Body of pancreas (tissue), 4 donors: ENCODE measurements at regions of chr17 and their contacts with region 1.

Region 1: DNA sequence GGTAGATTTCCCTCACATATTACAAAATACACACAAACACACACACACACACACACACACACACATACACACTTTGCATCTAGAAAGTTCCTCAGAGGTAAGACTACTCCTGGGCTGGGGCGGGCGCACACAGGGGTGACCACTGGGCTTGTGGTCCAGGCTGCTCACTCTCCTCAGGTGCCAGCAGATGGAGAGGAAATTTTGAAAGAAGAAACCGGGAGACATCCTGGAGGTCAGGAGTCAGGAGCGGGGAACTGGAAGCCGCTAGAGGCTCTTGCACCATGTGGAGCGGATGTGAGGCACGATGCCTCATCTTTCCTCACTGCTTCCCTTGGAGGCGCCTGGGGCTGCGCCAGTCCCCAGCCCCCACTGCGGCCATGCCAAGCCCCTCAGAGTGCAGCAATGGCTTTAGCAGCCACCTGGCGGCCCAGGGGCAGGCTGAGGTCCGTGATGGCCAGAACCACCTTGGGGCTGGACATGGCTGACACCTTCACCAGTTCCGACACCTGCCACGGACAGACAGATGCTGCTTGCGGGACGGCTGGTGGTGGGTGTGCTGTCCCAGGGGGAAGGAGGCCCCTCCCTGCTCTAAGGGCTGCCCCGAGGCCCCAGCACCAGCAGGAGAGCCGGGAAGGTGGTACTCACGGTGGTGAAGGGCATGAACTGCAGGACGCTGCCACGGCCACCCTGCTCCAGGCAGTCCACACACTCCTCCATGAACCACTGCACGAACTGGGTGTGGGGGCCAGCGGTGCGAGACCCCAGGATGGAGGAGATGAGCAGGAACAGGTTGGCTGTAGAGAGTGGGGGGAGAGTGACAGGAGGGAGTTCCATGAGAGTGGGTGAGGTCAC is 4.1 kb downstream of the CSF3 start:
- DNase-seq: peak in 1 of 4 donors; percentile 31
- ATAC-seq: no peak
- H3K4me3 ChIP-seq: no peak overlapping the region
- H3K27ac ChIP-seq: no peak overlapping the region
- H3K4me1 ChIP-seq: peaks cover 25% of the 10 kb centered on the region
- H3K27me3 ChIP-seq: no peaks in the 10 kb centered on the region
- CTCF ChIP-seq: no peak
- POLR2A ChIP-seq: no peak

Region 2: GRCh38 chr17:40168262-40168832 is 149.0 kb after region 1 on chr17:
- intact Hi-C with region 1: loop called (anchors 10 kb)
- DNase-seq: peak; percentile 35 to 72 (median 66)
- ATAC-seq: peak; percentile 88
- H3K4me3 ChIP-seq: no peak overlapping the region
- H3K27ac ChIP-seq: peak overlapping the region in 3 of 4 donors; percentile 13 to 57 (median 55)
- H3K4me1 ChIP-seq: peaks cover 9% of the 10 kb centered on the region
- H3K27me3 ChIP-seq: no peaks in the 10 kb centered on the region
- CTCF ChIP-seq: peak; percentile 57 to 97 (median 95)
- POLR2A ChIP-seq: no peak

Region 3: GRCh38 chr17:40290629-40291287 is 271.4 kb after region 1 on chr17:
- intact Hi-C with region 1: loop called (anchors 10 kb)
- DNase-seq: peak; percentile 57 to 86 (median 68)
- ATAC-seq: no peak
- H3K4me3 ChIP-seq: no peak overlapping the region
- H3K27ac ChIP-seq: no peak overlapping the region
- H3K4me1 ChIP-seq: peaks cover 24% of the 10 kb centered on the region
- H3K27me3 ChIP-seq: no peaks in the 10 kb centered on the region
- CTCF ChIP-seq: peak; percentile 13 to 79 (median 69)
- POLR2A ChIP-seq: no peak